ENCODE measurements at regions of chr1 and their contacts with region 1.

Region 1: DNA sequence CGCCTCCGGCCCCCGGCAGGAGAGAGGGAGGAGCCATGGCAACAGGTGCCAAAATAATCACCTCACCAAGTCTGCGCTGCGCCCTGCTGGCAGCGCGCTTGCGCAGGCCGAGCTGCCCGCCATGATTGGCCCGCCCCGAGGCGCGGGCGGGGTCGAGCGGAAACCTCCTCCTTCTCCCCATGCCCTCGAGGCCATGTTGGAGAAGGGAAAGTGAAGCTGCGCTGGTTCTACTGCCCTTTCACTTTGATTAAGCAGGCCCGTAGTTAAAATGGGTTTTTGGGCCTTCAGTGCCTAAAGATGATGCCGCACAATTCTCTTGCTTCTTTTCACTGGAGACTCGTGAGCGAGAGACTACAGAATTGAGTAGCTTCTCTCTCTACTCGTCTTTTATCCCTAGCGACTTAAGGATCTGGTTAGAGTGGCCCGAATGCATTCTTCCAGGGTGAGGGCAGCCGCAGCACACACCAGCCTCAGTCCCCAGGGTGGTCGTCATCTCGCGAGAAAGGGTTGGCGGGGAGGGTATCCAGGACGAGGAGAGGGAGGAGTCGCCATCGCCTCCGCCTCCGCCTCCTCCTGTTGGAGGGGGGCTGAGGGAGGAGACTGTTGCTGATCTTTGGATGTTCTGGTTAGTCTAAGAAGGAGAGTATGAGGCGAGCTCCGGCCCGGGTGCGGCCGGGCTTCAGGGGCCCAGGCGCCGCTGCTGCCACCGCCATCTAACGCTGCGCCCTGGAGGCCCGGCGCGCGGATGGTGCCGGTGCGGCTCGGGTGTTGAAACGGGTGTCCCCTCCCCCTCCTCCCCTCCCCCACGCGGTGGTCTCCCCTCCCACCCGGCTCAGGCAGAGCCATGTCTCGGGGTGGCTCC is at the start of gene DCAF6:
- DNase-seq: peak; percentile 97
- H3K4me3 Mint-ChIP-seq: peak within 1 kb of the TSS; percentile 94
- H3K27ac Mint-ChIP-seq: peak within 1 kb of the TSS; percentile 99
- H3K4me1 Mint-ChIP-seq: peaks cover 35% of the 10 kb centered on the region
- H3K27me3 Mint-ChIP-seq: no peaks in the 10 kb centered on the region
- total RNA-seq, gene DCAF6: 29.6 and 33.1 TPM in 2 replicates

Region 2: GRCh38 chr1:167627865-167628641 is 308.2 kb before region 1 on chr1:
- intact Hi-C with region 1: loop called (anchors 2 kb)
- DNase-seq: peak; percentile 84
- H3K4me3 Mint-ChIP-seq: peak overlapping the region; percentile 96
- H3K27ac Mint-ChIP-seq: peak overlapping the region; percentile 95
- H3K4me1 Mint-ChIP-seq: peaks cover 55% of the 10 kb centered on the region
- H3K27me3 Mint-ChIP-seq: no peaks in the 10 kb centered on the region

Region 3: DNA sequence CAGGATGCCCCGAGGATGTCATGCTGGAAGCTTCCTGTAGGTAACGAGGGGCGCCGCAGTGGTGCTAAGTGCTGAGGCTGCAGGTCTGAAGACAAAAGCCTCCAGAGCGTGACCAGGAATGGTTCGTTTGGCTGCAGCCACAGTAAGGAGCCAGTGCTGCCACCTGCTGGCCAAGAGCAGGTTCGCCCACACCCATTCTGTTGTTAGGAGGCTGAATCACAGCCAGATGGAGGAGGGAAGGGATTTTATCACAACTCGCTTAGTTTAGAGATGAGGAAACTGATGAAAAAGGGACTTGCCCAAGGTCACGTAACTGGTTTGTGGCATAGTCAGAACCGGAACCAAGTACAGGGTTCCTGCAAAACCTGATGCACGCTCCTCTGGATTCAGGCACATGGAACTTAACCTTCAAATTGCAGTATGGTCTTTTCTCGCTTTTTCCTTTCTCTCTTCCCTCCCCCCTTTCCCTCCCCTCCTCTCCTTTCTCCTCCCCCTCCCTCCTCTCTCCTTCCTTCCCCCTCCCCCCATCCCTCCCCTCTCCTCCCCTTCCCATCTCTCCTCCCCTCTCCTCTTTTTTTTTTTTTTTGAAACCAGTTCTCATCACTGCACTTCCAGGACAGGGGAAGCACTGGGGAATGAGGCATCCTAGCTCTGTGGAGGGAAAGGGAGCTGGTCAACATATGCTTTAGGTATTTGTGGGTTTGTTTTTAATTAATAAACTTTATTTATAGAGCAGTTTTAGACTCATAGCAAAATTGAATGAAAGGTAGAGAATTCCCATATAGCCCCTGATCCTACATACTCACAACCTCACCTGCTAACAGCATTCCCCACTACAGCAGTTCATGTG is 132.7 kb before region 1 on chr1:
- intact Hi-C with region 1: loop called (anchors 5 kb)
- DNase-seq: peak; percentile 79
- H3K4me3 Mint-ChIP-seq: peak overlapping the region; percentile 46
- H3K27ac Mint-ChIP-seq: peak overlapping the region; percentile 85
- H3K4me1 Mint-ChIP-seq: peaks cover 28% of the 10 kb centered on the region
- H3K27me3 Mint-ChIP-seq: no peaks in the 10 kb centered on the region

Region 4: GRCh38 chr1:167913863-167914502 is 22.3 kb before region 1 on chr1 and contains the start of gene ADCY10:
- intact Hi-C with region 1: no loop called
- DNase-seq: no peak
- H3K4me3 Mint-ChIP-seq: no peak within 1 kb of the TSS
- H3K27ac Mint-ChIP-seq: no peak within 1 kb of the TSS
- H3K4me1 Mint-ChIP-seq: no peaks in the 10 kb centered on the region
- H3K27me3 Mint-ChIP-seq: peaks cover 5% of the 10 kb centered on the region
- total RNA-seq, gene ADCY10: 0.07 and 0.09 TPM in 2 replicates

Region 5: GRCh38 chr1:168136709-168137514 is 200.6 kb after region 1 on chr1 and contains the start of gene GPR161:
- intact Hi-C with region 1: loop called (anchors 5 kb)
- DNase-seq: peak; percentile 29
- H3K4me3 Mint-ChIP-seq: peak within 1 kb of the TSS; percentile 85
- H3K27ac Mint-ChIP-seq: peak within 1 kb of the TSS; percentile 33
- H3K4me1 Mint-ChIP-seq: peaks cover 16% of the 10 kb centered on the region
- H3K27me3 Mint-ChIP-seq: peaks cover 48% of the 10 kb centered on the region
- total RNA-seq, gene GPR161: 1.3 and 2.4 TPM in 2 replicates

Region 6: GRCh38 chr1:168321945-168322344 is 385.6 kb after region 1 on chr1:
- intact Hi-C with region 1: loop called (anchors 10 kb)
- DNase-seq: no peak
- H3K4me3 Mint-ChIP-seq: no peak overlapping the region
- H3K27ac Mint-ChIP-seq: peak overlapping the region; percentile 8
- H3K4me1 Mint-ChIP-seq: peaks cover 47% of the 10 kb centered on the region
- H3K27me3 Mint-ChIP-seq: no peaks in the 10 kb centered on the region